Activated T-helper 2 cell treated with anti-CD3 and anti-CD28 coated beads, Interferon-gamma antibody, Interleukin-2, Interleukin-4, amounts not matched to agents 10 μg/mL and 5 μg/mL and 100 μg/mL, durations not matched to agents 14 hours and 24 hours and 36 hours (primary cell): ENCODE measurements at regions of chr15 and their contacts with region 1.

Region 1: GRCh38 chr15:96362755-96363651 is 32.5 kb downstream of the NR2F2 start:
- DNase-seq: no peak
- H3K4me3 Mint-ChIP-seq: no peak overlapping the region
- H3K27ac Mint-ChIP-seq: no peak overlapping the region
- H3K4me1 Mint-ChIP-seq: peaks cover 9% of the 10 kb centered on the region
- H3K27me3 Mint-ChIP-seq: peaks cover 81% of the 10 kb centered on the region

Region 2: GRCh38 chr15:95812491-95812890 is 550.5 kb before region 1 on chr15:
- intact Hi-C with region 1: no loop called
- DNase-seq: no peak
- H3K4me3 Mint-ChIP-seq: no peak overlapping the region
- H3K27ac Mint-ChIP-seq: no peak overlapping the region
- H3K4me1 Mint-ChIP-seq: no peaks in the 10 kb centered on the region
- H3K27me3 Mint-ChIP-seq: peaks cover 1% of the 10 kb centered on the region

Region 3: DNA sequence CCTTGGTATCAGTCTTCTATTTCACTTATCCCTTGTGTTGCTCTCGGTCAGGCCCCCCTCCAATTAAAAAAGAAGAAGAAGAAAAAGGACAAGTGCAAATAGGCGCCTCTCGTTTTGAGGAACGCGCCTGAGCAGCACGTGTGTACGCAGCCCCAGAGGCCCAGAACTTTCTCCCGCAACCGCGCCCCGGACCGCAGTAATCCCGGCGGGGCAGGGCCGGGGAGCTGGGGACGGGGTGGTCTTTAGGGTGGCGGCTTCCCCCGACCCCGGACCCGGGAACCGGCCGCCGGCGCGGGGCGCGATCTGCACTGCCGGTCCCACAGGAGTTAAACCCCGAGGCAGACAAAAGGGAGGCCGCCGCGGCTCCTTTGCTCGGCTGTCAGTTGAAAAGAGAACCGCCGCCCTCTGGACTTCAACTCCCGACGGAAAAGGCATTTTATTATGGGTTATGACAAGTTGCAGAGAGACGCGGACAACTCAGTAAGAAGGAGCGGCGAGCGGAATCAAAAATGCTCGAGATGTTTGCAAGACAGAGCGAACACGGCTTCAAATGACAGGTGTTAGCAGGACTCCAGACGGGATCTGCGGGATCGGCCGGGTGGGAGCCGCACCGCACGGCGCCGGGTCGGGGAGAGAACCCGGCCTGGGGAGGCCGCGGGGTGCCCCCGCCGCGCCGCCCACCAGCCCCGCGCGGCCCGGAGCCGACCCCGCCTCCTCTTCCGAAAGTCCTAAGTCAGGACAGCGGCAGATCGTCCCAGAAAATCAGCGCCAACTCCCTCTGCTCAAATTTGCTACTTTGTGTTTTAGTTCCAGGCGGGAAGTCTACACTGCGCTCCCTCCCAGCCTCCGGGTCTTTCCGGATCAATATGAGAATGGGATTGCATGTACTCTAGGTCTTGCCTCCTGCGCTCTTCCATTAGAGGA is 46.5 kb after region 1 on chr15:
- intact Hi-C with region 1: loop called (anchors 2 kb)
- DNase-seq: no peak
- H3K4me3 Mint-ChIP-seq: no peak overlapping the region
- H3K27ac Mint-ChIP-seq: no peak overlapping the region
- H3K4me1 Mint-ChIP-seq: no peaks in the 10 kb centered on the region
- H3K27me3 Mint-ChIP-seq: peaks cover 72% of the 10 kb centered on the region